ENCODE measurements at regions of chr3 and their contacts with region 1.

Region 1: GRCh38 chr3:185983495-185984141 is 45.8 kb upstream of the TRA2B start:
- DNase-seq: peak; percentile 60 to 63
- ATAC-seq: peak; percentile 94 to 96
- H3K4me3 ChIP-seq: no peak overlapping the region
- H3K27ac ChIP-seq: no peak overlapping the region
- H3K4me1 ChIP-seq: no peaks in the 10 kb centered on the region
- H3K27me3 ChIP-seq: no peaks in the 10 kb centered on the region
- CTCF ChIP-seq: peak; percentile 84 to 96 (median 92)
- POLR2A ChIP-seq: no peak

Region 2: DNA sequence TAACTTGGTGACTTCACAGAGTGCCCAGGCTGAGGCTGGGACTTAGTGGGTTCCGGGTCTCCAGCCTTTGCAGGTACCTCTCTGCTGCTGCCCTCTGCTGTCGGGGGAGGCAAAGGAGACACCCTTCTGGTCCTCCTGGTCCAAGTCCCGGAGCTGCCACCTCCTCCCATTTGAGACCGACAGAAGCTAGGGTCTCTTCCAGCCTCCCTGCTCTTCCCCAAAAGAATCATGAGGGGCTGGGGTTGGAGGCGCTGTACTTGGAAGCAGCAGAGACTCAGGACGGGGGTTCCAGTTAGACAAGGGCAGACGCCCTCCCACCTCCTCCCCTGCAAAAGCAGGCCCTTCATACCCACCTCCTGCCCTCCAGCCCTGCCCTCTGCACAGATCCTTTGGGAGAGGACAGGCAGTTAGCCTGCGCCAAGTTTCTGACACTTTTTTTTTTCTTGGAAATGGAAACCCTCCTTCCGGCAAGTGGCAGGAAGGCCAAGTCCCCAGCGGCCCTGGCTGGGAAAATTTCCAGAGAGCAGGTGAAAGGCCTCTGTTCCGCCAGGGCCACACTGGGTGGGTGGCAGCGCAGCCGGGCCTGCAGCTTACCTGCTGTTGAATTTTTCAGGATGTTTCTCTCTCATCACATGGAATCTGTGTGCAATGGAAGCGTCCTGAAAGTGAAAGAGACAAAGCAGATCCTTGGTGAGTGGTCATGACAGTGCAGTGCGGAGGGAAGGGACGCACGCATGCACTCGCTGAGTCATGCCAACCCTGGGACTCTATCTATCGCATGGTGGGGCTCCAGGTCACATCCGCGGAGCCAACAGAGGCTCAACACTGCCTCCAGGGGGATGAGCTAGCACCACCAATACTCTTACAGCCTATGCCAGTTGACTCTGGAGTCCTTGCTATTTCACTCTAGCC is 258.5 kb after region 1 on chr3:
- in situ Hi-C with region 1: loop called (anchors 10 kb)
- intact Hi-C with region 1: loop called (anchors 1 kb)
- DNase-seq: peak; percentile 61 to 84
- ATAC-seq: peak; percentile 79 to 88
- H3K4me3 ChIP-seq: peak overlapping the region; percentile 30 to 59 (median 54)
- H3K27ac ChIP-seq: peak overlapping the region; percentile 85 to 88 (median 86)
- H3K4me1 ChIP-seq: peaks cover 25 to 28% of the 10 kb centered on the region in 2 donors
- H3K27me3 ChIP-seq: no peaks in the 10 kb centered on the region
- CTCF ChIP-seq: peak; percentile 54 to 71 (median 62)
- POLR2A ChIP-seq: peak in 1 of 2 donors; percentile 21

Region 3: DNA sequence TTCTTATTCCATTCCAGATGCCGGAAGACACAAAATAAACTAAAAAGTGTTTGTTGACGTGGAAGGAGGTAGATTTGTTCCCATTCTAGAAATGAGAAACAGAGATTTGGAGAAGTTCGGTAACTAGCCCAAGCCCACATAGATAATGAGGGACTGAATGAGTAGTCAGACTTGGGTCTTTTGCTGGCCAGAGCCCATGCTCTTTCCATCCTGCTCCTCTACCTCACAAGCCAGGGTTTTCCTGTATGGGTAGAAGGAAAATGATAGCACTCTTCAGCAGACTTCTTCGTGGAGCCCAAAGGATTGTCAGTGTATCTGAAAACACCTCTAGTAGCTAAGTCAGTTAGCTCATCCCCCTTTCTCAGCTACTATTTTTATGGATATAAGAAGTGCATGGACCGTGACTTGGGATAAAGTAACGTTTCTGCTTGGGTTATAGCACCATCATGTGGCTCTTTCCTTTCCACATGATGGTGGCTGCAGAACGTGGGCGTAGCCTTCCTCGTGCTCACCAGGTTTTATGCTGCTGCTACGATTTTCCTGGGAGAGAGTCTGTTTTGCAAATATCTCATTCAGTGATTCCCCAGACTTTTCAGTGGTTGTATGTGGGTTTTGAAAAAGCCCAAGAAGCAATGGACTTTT is 293.8 kb after region 1 on chr3:
- in situ Hi-C with region 1: loop called in 3 of 4 experiments (anchors 5 to 10 kb)
- intact Hi-C with region 1: loop called (anchors 1 kb)
- DNase-seq: no peak
- ATAC-seq: peak; percentile 88 to 89
- H3K4me3 ChIP-seq: no peak overlapping the region
- H3K27ac ChIP-seq: no peak overlapping the region
- H3K4me1 ChIP-seq: no peaks in the 10 kb centered on the region
- H3K27me3 ChIP-seq: no peaks in the 10 kb centered on the region
- CTCF ChIP-seq: peak; percentile 28 to 67 (median 57)
- POLR2A ChIP-seq: no peak

Region 4: DNA sequence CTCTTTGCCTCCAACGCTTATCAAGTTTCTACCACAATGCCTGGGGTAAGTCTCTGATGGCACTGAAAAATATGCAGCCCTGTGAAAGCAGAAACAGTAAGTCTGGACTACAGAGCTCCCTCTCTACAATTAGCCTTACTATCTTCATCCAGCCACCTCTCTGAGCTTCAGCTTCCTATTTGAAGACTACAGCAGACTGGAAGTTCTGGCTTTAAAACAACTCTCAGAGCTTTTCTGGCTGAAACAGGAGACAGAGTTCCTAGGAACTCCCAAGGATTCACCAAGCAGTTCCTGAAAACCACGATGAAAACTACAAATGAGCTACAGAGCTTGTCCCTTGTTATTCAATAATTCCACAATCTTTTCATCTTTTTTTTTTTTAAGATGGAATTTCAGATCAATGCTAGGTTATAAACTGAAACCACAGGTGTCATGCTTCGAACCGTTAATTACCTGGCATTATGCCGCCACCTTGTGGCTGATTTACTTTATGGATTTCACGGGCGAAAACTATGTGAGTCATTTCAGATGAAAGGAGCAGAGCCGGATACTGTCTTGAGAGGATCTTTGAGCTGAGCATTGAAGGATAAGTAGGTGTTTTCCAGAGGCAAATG is 556.7 kb after region 1 on chr3:
- in situ Hi-C with region 1: loop called (anchors 5 to 10 kb)
- intact Hi-C with region 1: loop called (anchors 2 kb)
- DNase-seq: peak; percentile 29 to 51
- ATAC-seq: peak; percentile 73 to 90
- H3K4me3 ChIP-seq: peak overlapping the region in 3 of 4 donors; percentile 7 to 26 (median 7)
- H3K27ac ChIP-seq: no peak overlapping the region
- H3K4me1 ChIP-seq: peaks cover 0 to 6% of the 10 kb centered on the region in 2 donors
- H3K27me3 ChIP-seq: no peaks in the 10 kb centered on the region
- CTCF ChIP-seq: peak; percentile 56 to 72 (median 65)
- POLR2A ChIP-seq: no peak

Region 5: GRCh38 chr3:186617038-186617946 is 633.7 kb after region 1 on chr3:
- in situ Hi-C with region 1: no loop called
- intact Hi-C with region 1: loop called (anchors 5 kb)
- DNase-seq: peak; percentile 31 to 47
- ATAC-seq: peak; percentile 68 to 81
- H3K4me3 ChIP-seq: peak overlapping the region in 1 of 4 donors; percentile 27
- H3K27ac ChIP-seq: no peak overlapping the region
- H3K4me1 ChIP-seq: peaks cover 0 to 6% of the 10 kb centered on the region in 2 donors
- H3K27me3 ChIP-seq: peaks cover 10 to 15% (median 14%) of the 10 kb centered on the region in 3 donors
- CTCF ChIP-seq: peak; percentile 39 to 86 (median 65)
- POLR2A ChIP-seq: no peak

Measured in gastrocnemius medialis (tissue), 4 donors.